Ovary (tissue), 10 donors: ENCODE measurements at regions of chr17 and their contacts with region 1.

Region 1: GRCh38 chr17:11459861-11460331 is 138.4 kb upstream of the DNAH9 start:
- DNase-seq: no peak
- H3K4me3 ChIP-seq: no peak overlapping the region
- H3K27ac ChIP-seq: no peak overlapping the region
- H3K4me1 ChIP-seq: no peaks in the 10 kb centered on the region
- H3K27me3 ChIP-seq: no peaks in the 10 kb centered on the region
- CTCF ChIP-seq: no peak
- EP300 ChIP-seq: no peak
- POLR2A ChIP-seq: no peak

Region 2: DNA sequence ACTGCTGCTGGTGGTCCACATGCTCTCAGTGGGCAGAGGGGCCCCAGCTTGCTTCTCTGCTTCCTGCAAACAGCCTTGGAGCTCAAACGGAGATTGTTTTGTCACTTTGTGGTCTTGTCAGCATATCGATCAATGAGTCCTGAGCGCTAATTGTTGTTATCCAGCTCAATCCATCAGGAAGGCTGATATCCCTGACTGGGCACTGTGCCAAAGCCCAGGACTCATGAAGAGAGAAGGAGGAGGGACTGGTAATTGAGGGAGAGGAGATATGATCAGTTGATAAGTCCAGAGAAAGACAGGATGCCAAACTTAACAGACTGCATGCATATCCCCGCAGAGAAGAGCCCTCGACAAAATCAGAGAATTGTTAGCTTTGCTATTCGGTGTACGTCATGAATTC is 79.7 kb after region 1 on chr17:
- intact Hi-C with region 1: loop called in 1 of 4 experiments (anchors 2 kb)
- DNase-seq: no peak
- H3K4me3 ChIP-seq: no peak overlapping the region
- H3K27ac ChIP-seq: no peak overlapping the region
- H3K4me1 ChIP-seq: no peaks in the 10 kb centered on the region
- H3K27me3 ChIP-seq: no peaks in the 10 kb centered on the region
- CTCF ChIP-seq: no peak
- EP300 ChIP-seq: no peak
- POLR2A ChIP-seq: no peak